ENCODE measurements at regions of chr3 and their contacts with region 1.

Region 1: DNA sequence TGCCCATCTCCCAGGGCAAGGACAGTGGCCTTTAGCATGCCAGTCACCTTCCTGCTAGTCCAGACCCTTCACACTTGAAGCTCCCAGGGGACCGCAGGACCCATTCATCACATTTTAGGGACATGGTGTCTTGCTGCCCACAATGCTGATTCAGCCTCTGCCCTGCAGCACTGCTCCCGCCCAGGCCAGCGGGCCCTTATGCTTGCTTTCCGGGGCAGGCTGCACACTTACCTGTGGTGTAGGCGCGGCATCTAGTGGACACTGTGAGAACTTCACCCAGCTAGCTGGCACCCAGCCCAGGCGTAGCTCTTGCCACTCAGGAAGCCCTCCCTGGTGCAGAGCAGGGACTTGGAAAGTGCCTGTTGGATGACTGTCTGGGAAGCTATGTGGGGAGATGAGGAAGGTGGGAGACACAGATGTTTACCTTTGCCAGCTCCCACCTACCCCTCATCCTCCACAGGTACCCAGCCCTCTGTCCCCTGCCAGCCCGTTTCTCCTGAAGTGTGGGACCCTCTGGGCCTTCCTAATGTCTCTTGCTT is 26.2 kb upstream of the NR2C2 start:
- DNase-seq: peak; percentile 79
- H3K4me3 Mint-ChIP-seq: no peak overlapping the region
- H3K27ac Mint-ChIP-seq: no peak overlapping the region
- H3K4me1 Mint-ChIP-seq: no peaks in the 10 kb centered on the region
- H3K27me3 Mint-ChIP-seq: peaks cover 26% of the 10 kb centered on the region
- CTCF ChIP-seq: peak; percentile 99

Region 2: GRCh38 chr3:14124615-14125190 is 796.4 kb before region 1 on chr3 and contains the starts of genes CHCHD4 and TMEM43:
- CTCF ChIA-PET with region 1: no interaction called
- POLR2A ChIA-PET with region 1: no interaction called
- intact Hi-C with region 1: no loop called
- DNase-seq: peak; percentile 99
- H3K4me3 Mint-ChIP-seq: peak within 1 kb of the TSS; percentile 99
- H3K27ac Mint-ChIP-seq: peak within 1 kb of the TSS; percentile 96
- H3K4me1 Mint-ChIP-seq: peaks cover 30% of the 10 kb centered on the region
- H3K27me3 Mint-ChIP-seq: no peaks in the 10 kb centered on the region
- CTCF ChIP-seq: no peak
- total RNA-seq, gene CHCHD4: 31.6 and 35.0 TPM in 2 replicates
- total RNA-seq, gene TMEM43: 120 and 124 TPM in 2 replicates

Region 3: GRCh38 chr3:14508961-14509795 is 412.0 kb before region 1 on chr3:
- CTCF ChIA-PET with region 1: interaction called, 22 read pairs
- POLR2A ChIA-PET with region 1: interaction called, 4 read pairs
- intact Hi-C with region 1: loop called (anchors 1 kb)
- DNase-seq: peak; percentile 56
- H3K4me3 Mint-ChIP-seq: no peak overlapping the region
- H3K27ac Mint-ChIP-seq: no peak overlapping the region
- H3K4me1 Mint-ChIP-seq: no peaks in the 10 kb centered on the region
- H3K27me3 Mint-ChIP-seq: no peaks in the 10 kb centered on the region
- CTCF ChIP-seq: peak; percentile 96

Region 4: GRCh38 chr3:14680716-14681115 is 240.4 kb before region 1 on chr3:
- CTCF ChIA-PET with region 1: interaction called, 94 read pairs
- POLR2A ChIA-PET with region 1: interaction called, 5 read pairs
- intact Hi-C with region 1: no loop called
- DNase-seq: no peak
- H3K4me3 Mint-ChIP-seq: no peak overlapping the region
- H3K27ac Mint-ChIP-seq: no peak overlapping the region
- H3K4me1 Mint-ChIP-seq: no peaks in the 10 kb centered on the region
- H3K27me3 Mint-ChIP-seq: peaks cover 6% of the 10 kb centered on the region
- CTCF ChIP-seq: no peak

Region 5: GRCh38 chr3:14871481-14872200 is 49.5 kb before region 1 on chr3:
- CTCF ChIA-PET with region 1: no interaction called
- POLR2A ChIA-PET with region 1: no interaction called
- intact Hi-C with region 1: no loop called
- DNase-seq: no peak
- H3K4me3 Mint-ChIP-seq: no peak overlapping the region
- H3K27ac Mint-ChIP-seq: no peak overlapping the region
- H3K4me1 Mint-ChIP-seq: no peaks in the 10 kb centered on the region
- H3K27me3 Mint-ChIP-seq: peaks cover 53% of the 10 kb centered on the region
- CTCF ChIP-seq: no peak

Region 6: GRCh38 chr3:14947886-14948555 is 26.9 kb after region 1 on chr3:
- CTCF ChIA-PET with region 1: interaction called, 10 read pairs
- POLR2A ChIA-PET with region 1: interaction called, 5 read pairs
- intact Hi-C with region 1: no loop called
- DNase-seq: peak; percentile 95
- H3K4me3 Mint-ChIP-seq: peak overlapping the region; percentile 99
- H3K27ac Mint-ChIP-seq: peak overlapping the region; percentile 99
- H3K4me1 Mint-ChIP-seq: peaks cover 24% of the 10 kb centered on the region
- H3K27me3 Mint-ChIP-seq: no peaks in the 10 kb centered on the region
- CTCF ChIP-seq: no peak

Region 7: GRCh38 chr3:15064835-15065549 is 143.8 kb after region 1 on chr3 and contains the start of gene MRPS25:
- CTCF ChIA-PET with region 1: interaction called, 6 read pairs
- POLR2A ChIA-PET with region 1: interaction called, 5 read pairs
- intact Hi-C with region 1: loop called (anchors 5 kb)
- DNase-seq: peak; percentile 90
- H3K4me3 Mint-ChIP-seq: peak within 1 kb of the TSS; percentile 80
- H3K27ac Mint-ChIP-seq: peak within 1 kb of the TSS; percentile 93
- H3K4me1 Mint-ChIP-seq: peaks cover 10% of the 10 kb centered on the region
- H3K27me3 Mint-ChIP-seq: no peaks in the 10 kb centered on the region
- CTCF ChIP-seq: no peak
- total RNA-seq, gene MRPS25: 81.0 and 87.2 TPM in 2 replicates

Region 8: GRCh38 chr3:15291589-15292541 is 370.7 kb after region 1 on chr3:
- CTCF ChIA-PET with region 1: no interaction called
- POLR2A ChIA-PET with region 1: no interaction called
- intact Hi-C with region 1: no loop called
- DNase-seq: no peak
- H3K4me3 Mint-ChIP-seq: no peak overlapping the region
- H3K27ac Mint-ChIP-seq: no peak overlapping the region
- H3K4me1 Mint-ChIP-seq: peaks cover 10% of the 10 kb centered on the region
- H3K27me3 Mint-ChIP-seq: no peaks in the 10 kb centered on the region
- CTCF ChIP-seq: no peak

Measured in MCF 10A (cell line).